Posterior vena cava (tissue), 2 donors: ENCODE measurements at regions of chr1 and their contacts with region 1.

Region 1: DNA sequence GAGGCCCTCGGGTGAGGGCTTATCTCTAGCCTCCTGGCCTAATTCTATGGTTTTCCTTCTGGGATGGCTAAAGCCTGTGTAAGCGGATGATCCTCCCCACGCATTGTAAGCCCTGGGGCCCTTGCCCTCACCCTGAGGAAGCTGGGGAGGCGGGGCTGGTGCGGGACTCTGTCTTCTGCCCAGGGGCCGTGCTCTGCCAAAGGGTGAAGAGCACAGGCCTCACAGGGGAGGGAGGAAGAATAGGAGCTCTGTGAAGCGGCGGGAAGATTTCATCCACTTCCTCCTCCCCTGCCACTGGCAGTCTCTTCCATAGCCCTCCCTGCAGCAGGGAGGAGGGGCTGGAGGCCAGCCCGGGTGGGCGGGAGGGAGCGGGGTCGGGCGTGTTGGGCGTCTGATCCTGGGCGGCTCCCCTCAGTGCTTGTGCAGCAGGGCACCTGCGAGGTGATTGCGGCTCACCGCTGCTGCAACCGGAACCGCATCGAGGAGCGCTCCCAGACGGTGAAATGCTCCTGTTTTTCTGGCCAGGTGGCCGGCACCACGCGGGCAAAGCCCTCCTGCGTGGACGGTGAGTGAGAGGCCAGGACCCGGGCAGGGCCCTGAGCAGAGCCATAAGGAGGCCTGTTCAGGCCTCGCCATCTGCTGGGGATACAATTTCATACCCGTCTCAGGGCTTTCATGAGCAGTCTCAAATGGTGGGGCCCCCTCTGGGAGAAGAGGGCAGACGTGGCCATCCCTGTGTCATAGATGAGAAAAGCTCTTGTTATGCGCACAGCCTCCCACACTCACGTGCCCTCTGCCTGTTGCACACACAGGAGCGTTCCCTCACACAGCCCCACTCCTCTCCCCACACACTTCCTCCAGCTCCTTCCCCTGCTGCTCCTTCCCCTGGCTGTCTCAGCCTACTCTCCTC is 7.7 kb upstream of the PPM1J start:
- DNase-seq: no peak

Region 2: GRCh38 chr1:112660072-112660471 is 62.8 kb before region 1 on chr1:
- intact Hi-C with region 1: no loop called
- DNase-seq: no peak

Region 3: GRCh38 chr1:112803906-112804762 is 81.3 kb after region 1 on chr1:
- intact Hi-C with region 1: loop called (anchors 5 kb)
- DNase-seq: no peak

Region 4: DNA sequence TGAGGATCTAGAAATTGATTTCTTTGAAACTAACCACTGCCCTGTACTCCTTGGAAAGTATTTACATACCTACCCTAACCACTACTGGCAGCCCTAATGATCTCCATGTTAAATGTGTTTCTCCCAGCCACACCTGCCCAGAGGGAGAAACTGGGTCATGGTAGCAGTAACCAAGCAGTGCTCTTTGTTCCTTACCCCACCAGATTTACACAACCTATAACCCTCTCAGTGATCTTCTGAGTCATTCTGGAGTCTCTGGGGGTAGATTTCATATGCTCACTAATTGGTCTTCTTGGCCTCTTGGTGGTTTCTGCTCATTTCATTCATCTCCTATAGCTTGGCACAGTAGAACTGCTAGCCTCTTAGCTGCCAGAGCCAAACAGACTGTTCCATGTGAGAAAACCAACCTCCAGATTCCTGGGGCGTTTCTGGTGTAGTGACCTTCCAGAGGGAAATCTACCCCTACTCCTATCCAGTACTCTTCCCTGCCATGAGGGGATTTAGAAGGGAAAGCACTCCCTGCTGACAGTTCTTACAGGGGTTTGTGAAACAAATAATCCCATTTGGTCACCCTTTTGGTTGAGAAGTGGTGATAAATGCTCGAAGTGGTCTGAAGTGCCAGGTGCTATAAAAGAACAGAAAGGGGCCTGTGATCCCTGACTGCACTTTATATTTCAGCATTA is 313.9 kb after region 1 on chr1:
- intact Hi-C with region 1: loop called (anchors 10 kb)
- DNase-seq: no peak